Common myeloid progenitor, CD34-positive (primary cell): ENCODE measurements at regions of chr22 and their contacts with region 1.

Region 1: DNA sequence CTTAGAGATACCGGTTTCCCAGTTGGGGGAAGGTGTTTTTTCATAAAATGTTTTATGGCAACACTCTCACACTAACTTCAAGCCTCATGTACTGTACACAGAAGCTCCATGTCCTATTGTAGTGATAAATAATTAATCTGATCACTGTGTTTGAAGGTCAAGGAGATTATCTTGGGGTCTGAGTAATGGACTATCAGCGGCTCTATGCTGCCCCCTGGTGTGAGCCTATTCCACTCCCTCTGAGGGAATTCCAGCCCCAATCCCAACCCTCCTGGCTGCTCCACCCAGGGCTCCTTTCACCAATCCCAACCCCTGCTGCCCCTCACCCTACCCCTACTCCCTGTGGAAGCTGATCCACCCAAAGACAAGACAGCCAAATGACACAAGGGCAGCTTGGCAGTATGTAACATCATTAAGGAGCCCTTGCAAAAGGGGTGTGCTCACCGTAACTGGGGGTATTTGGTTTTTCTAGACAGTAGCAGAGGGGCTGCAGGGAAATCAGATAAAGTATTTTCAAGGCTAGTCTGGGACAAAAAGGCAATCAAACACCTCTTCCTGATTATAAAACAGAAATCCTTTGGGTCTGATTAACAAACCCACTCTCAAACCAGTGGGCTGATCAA is 22.3 kb downstream of the HPS4 start:
- DNase-seq: peak in 2 of 3 donors; percentile 23 to 30
- H3K4me3 ChIP-seq: no peak overlapping the region
- H3K27ac ChIP-seq: no peak overlapping the region
- H3K4me1 ChIP-seq: no peaks in the 10 kb centered on the region
- H3K27me3 ChIP-seq: no peaks in the 10 kb centered on the region

Region 2: GRCh38 chr22:26364066-26365015 is 97.0 kb before region 1 on chr22:
- CTCF ChIA-PET with region 1: interaction called, 51 read pairs
- POLR2A ChIA-PET with region 1: no interaction called
- DNase-seq: peak; percentile 77 to 88 (median 88)
- H3K4me3 ChIP-seq: no peak overlapping the region
- H3K27ac ChIP-seq: no peak overlapping the region
- H3K4me1 ChIP-seq: peaks cover 0 to 8% (median 0%) of the 10 kb centered on the region in 4 experiments
- H3K27me3 ChIP-seq: peaks cover 0 to 6% (median 0%) of the 10 kb centered on the region in 5 experiments

Region 3: GRCh38 chr22:26391623-26392022 is 69.7 kb before region 1 on chr22:
- CTCF ChIA-PET with region 1: interaction called, 94 read pairs
- POLR2A ChIA-PET with region 1: no interaction called
- DNase-seq: no peak
- H3K4me3 ChIP-seq: no peak overlapping the region
- H3K27ac ChIP-seq: no peak overlapping the region
- H3K4me1 ChIP-seq: no peaks in the 10 kb centered on the region
- H3K27me3 ChIP-seq: peaks cover 0 to 2% (median 0%) of the 10 kb centered on the region in 5 experiments

Region 4: GRCh38 chr22:26404851-26405421 is 56.4 kb before region 1 on chr22:
- CTCF ChIA-PET with region 1: interaction called, 76 read pairs
- POLR2A ChIA-PET with region 1: no interaction called
- DNase-seq: peak; percentile 72 to 93 (median 90)
- H3K4me3 ChIP-seq: peak overlapping the region in 1 of 7 experiments; percentile 28
- H3K27ac ChIP-seq: no peak overlapping the region
- H3K4me1 ChIP-seq: peaks cover 2 to 25% (median 19%) of the 10 kb centered on the region in 4 experiments
- H3K27me3 ChIP-seq: no peaks in the 10 kb centered on the region

Region 5: DNA sequence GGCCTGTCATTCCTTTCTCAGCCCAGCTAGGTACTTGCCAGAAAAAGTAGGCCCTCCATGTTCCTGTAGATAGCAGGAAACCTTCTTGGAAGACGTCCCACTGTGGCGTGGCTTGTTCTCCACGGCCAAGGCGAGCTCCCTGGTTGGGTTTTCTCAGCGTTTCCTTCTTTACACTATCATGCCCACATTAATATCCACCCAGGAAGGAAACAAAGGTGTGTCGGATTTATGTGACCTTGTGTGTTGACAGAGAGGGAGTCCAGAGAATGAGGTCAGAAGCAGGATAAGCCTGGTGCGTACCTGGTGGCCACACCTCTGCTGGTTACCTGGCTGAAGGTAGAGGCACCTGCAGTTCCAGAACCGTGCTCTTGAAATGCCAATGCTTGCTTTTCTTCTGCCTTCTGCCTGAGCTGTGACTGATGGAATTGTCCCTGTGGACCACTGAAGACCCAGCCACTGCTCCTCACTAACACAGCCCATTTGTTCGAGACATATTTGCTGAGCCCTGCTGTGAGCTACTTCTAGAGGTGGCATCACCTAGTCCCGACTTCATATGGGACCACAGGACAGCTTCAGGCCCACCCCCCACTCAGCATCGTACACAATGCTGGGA is 24.3 kb before region 1 on chr22:
- CTCF ChIA-PET with region 1: interaction called, 13 read pairs
- POLR2A ChIA-PET with region 1: no interaction called
- DNase-seq: no peak
- H3K4me3 ChIP-seq: no peak overlapping the region
- H3K27ac ChIP-seq: no peak overlapping the region
- H3K4me1 ChIP-seq: peaks cover 0 to 16% (median 11%) of the 10 kb centered on the region in 4 experiments
- H3K27me3 ChIP-seq: no peaks in the 10 kb centered on the region

Region 6: GRCh38 chr22:26471522-26471921 is 10.2 kb after region 1 on chr22:
- CTCF ChIA-PET with region 1: interaction called, 16 read pairs
- POLR2A ChIA-PET with region 1: no interaction called
- DNase-seq: no peak
- H3K4me3 ChIP-seq: no peak overlapping the region
- H3K27ac ChIP-seq: no peak overlapping the region
- H3K4me1 ChIP-seq: peaks cover 0 to 7% (median 3%) of the 10 kb centered on the region in 4 experiments
- H3K27me3 ChIP-seq: no peaks in the 10 kb centered on the region

Region 7: DNA sequence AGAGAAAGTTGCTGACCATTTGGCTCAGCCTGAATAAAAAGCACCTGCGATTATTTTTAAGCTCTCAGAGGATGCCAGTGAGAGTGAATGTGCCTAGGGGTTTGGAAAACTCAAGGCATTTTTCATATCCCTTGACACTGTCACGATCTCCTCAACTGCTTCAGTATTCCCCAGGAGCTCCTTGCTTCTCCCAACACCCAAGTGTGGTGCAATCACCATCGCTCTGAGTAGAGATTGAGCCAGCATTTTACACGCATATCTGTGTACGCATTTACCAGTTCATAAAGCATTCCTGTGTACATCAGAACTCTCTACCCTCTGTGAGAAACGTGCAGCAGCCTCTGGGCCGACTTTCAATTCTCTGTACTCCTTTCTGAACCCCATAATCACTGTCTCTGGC is 23.7 kb after region 1 on chr22:
- CTCF ChIA-PET with region 1: no interaction called
- POLR2A ChIA-PET with region 1: no interaction called
- DNase-seq: no peak
- H3K4me3 ChIP-seq: peak overlapping the region in 3 of 7 experiments; percentile 19 to 98 (median 82)
- H3K27ac ChIP-seq: peak overlapping the region in 1 of 2 experiments; percentile 28
- H3K4me1 ChIP-seq: peaks cover 35 to 50% (median 45%) of the 10 kb centered on the region in 4 experiments
- H3K27me3 ChIP-seq: no peaks in the 10 kb centered on the region